ENCODE measurements at regions of chr1 and their contacts with region 1.

Region 1: DNA sequence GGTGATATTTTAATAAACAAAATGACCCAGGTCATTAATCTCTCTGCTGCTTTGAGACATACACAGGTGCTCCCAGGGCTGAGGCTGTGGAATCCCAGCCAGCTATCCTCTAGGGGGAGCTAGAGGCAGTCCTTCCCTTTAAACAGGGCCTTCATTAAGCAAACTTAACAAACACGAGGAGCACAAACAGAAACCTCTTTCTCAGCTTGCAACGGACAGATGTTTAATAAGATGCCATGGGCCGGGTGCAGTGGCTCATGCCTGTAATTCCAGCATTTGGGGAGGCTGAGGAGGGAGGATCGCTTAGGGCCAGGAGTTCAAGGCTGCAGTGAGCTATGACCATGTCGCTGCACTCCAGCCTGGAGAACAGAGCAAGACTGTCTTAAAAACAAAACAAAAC is 106.7 kb downstream of the HIVEP3 start:
- DNase-seq: peak in 1 of 2 donors; percentile 62
- H3K4me3 ChIP-seq: no peak overlapping the region
- H3K27ac ChIP-seq: no peak overlapping the region
- H3K4me1 ChIP-seq: no peaks in the 10 kb centered on the region
- H3K27me3 ChIP-seq: no peaks in the 10 kb centered on the region
- CTCF ChIP-seq: peak in 2 of 3 donors; percentile 57 to 69
- POLR2A ChIP-seq: no peak

Region 2: DNA sequence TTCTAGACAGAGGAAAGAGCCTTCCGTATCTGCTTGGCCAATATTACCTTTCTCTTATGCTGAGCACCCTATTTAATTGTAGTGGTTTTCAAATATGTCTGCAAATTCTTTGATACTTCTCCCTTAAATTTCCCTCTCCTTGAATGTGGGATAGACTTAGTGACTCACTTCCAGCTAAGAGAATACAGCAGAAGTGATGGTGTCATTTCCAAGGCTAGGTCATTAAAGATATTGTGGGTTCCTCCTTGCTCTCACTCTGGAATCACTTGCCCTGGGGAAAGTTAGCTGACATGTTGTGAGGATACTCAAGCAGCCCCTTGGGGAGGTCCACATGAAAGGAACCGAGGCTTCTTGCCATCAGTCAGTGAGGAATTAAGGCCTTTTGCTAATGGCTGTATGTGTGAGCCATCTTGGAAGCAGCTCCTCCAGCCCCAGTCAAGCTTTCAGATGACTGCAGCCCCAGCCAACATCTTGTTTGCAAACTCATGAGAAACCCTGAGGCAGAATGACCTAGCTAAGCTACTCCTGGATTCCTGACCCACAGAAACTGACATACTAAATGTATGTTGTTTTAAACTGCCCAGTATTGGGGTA is 941.8 kb before region 1 on chr1:
- intact Hi-C with region 1: loop called (anchors 5 kb)
- DNase-seq: no peak
- H3K4me3 ChIP-seq: no peak overlapping the region
- H3K27ac ChIP-seq: no peak overlapping the region
- H3K4me1 ChIP-seq: no peaks in the 10 kb centered on the region
- H3K27me3 ChIP-seq: no peaks in the 10 kb centered on the region
- CTCF ChIP-seq: no peak
- POLR2A ChIP-seq: no peak

Measured in breast epithelium (tissue), 4 donors.